CD8-positive, alpha-beta T cell (primary cell): ENCODE measurements at regions of chr15 and their contacts with region 1.

Region 1: GRCh38 chr15:85296615-85297402 is 83.6 kb upstream of the AKAP13 start:
- DNase-seq: peak; percentile 48 to 84 (median 67)
- ATAC-seq: peak; percentile 99
- H3K4me3 ChIP-seq: no peak overlapping the region
- H3K4me3 Mint-ChIP-seq: peak overlapping the region; percentile 59
- H3K27ac ChIP-seq: no peak overlapping the region
- H3K27ac Mint-ChIP-seq: no peak overlapping the region
- H3K4me1 ChIP-seq: no peaks in the 10 kb centered on the region
- H3K4me1 Mint-ChIP-seq: peaks cover 10% of the 10 kb centered on the region
- H3K27me3 ChIP-seq: no peaks in the 10 kb centered on the region
- H3K27me3 Mint-ChIP-seq: peaks cover under 1% of the 10 kb centered on the region
- CTCF ChIP-seq: peak; percentile 74

Region 2: DNA sequence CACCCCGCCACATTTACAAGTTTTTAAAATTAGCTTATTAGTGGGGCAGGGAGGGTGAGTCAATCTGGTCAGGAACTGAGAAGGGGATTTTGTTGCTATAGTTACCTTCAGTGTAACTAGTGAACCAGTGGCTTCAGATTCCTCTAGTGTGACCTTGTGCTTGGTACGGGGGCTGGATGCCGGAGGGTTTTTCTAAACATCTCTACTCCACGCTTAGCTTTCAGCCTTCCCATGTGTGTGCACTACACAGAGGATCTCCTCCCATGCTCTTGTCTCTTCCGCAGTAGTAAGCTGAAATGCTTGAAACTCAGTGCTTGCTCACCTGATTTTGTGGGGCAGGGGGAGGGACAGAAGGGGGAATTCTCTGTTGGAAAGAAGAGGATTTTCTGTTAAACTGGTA is 15.7 kb after region 1 on chr15:
- CTCF ChIA-PET with region 1: interaction called, 18 read pairs
- POLR2A ChIA-PET with region 1: no interaction called
- intact Hi-C with region 1: no loop called
- DNase-seq: peak in 2 of 9 experiments; percentile 18 to 42
- ATAC-seq: no peak
- H3K4me3 ChIP-seq: no peak overlapping the region
- H3K4me3 Mint-ChIP-seq: no peak overlapping the region
- H3K27ac ChIP-seq: no peak overlapping the region
- H3K27ac Mint-ChIP-seq: no peak overlapping the region
- H3K4me1 ChIP-seq: peaks cover 18% of the 10 kb centered on the region
- H3K4me1 Mint-ChIP-seq: peaks cover 34% of the 10 kb centered on the region
- H3K27me3 ChIP-seq: no peaks in the 10 kb centered on the region
- H3K27me3 Mint-ChIP-seq: no peaks in the 10 kb centered on the region
- CTCF ChIP-seq: no peak

Region 3: GRCh38 chr15:85412956-85413854 is 116.4 kb after region 1 on chr15:
- CTCF ChIA-PET with region 1: interaction called, 146 read pairs
- POLR2A ChIA-PET with region 1: interaction called, 4 read pairs
- intact Hi-C with region 1: loop called (anchors 1 kb)
- DNase-seq: peak; percentile 42 to 86 (median 75)
- ATAC-seq: peak; percentile 95
- H3K4me3 ChIP-seq: peak overlapping the region in 1 of 2 experiments; percentile 12
- H3K4me3 Mint-ChIP-seq: peak overlapping the region; percentile 56
- H3K27ac ChIP-seq: peak overlapping the region in 1 of 2 experiments; percentile 77
- H3K27ac Mint-ChIP-seq: peak overlapping the region; percentile 89
- H3K4me1 ChIP-seq: peaks cover 26% of the 10 kb centered on the region
- H3K4me1 Mint-ChIP-seq: peaks cover 65% of the 10 kb centered on the region
- H3K27me3 ChIP-seq: no peaks in the 10 kb centered on the region
- H3K27me3 Mint-ChIP-seq: no peaks in the 10 kb centered on the region
- CTCF ChIP-seq: no peak

Region 4: DNA sequence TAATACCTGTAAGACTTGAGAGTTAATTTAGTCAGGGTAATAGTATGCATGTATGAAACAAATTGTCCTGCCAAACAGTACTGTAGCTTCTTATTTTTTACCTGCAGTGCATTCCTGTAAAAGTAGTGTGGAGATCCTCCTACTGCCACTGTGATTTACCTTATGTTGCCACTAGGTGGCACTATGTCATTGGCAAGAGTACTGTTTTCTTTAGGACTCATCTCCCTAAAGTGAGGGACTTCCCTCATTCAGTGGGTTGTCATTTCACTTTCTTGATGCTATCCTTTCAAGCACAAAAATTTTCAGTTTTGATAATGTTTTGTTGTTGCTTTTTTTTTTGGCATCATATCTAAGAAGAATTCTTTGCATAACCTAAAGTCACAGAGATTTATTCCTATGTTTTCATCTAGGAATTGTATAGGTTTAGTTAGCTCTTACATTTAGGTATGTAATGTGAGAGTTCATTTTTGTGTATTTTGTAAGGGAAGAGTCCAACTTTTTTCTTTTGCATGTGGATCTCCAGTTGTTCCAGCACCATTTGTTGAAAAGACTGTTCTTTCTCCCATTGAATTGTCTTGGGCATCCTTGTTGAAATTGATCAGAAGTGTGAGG is 189.3 kb after region 1 on chr15:
- CTCF ChIA-PET with region 1: interaction called, 13 read pairs
- POLR2A ChIA-PET with region 1: no interaction called
- intact Hi-C with region 1: loop called (anchors 2 to 5 kb)
- DNase-seq: peak in 8 of 9 experiments; percentile 43 to 85 (median 59)
- ATAC-seq: peak; percentile 86
- H3K4me3 ChIP-seq: no peak overlapping the region
- H3K4me3 Mint-ChIP-seq: no peak overlapping the region
- H3K27ac ChIP-seq: no peak overlapping the region
- H3K27ac Mint-ChIP-seq: no peak overlapping the region
- H3K4me1 ChIP-seq: peaks cover 35% of the 10 kb centered on the region
- H3K4me1 Mint-ChIP-seq: peaks cover 71% of the 10 kb centered on the region
- H3K27me3 ChIP-seq: no peaks in the 10 kb centered on the region
- H3K27me3 Mint-ChIP-seq: no peaks in the 10 kb centered on the region
- CTCF ChIP-seq: peak; percentile 92

Region 5: GRCh38 chr15:85543741-85544155 is 246.9 kb after region 1 on chr15:
- CTCF ChIA-PET with region 1: interaction called, 13 read pairs
- POLR2A ChIA-PET with region 1: no interaction called
- intact Hi-C with region 1: no loop called
- DNase-seq: peak; percentile 10 to 82 (median 61)
- ATAC-seq: peak; percentile 84
- H3K4me3 ChIP-seq: peak overlapping the region in 1 of 2 experiments; percentile 9
- H3K4me3 Mint-ChIP-seq: peak overlapping the region; percentile 67
- H3K27ac ChIP-seq: peak overlapping the region; percentile 11 to 24
- H3K27ac Mint-ChIP-seq: peak overlapping the region; percentile 78
- H3K4me1 ChIP-seq: peaks cover 40% of the 10 kb centered on the region
- H3K4me1 Mint-ChIP-seq: peaks cover 75% of the 10 kb centered on the region
- H3K27me3 ChIP-seq: no peaks in the 10 kb centered on the region
- H3K27me3 Mint-ChIP-seq: no peaks in the 10 kb centered on the region
- CTCF ChIP-seq: peak; percentile 34